ENCODE measurements at regions of chr18 and their contacts with region 1.

Region 1: DNA sequence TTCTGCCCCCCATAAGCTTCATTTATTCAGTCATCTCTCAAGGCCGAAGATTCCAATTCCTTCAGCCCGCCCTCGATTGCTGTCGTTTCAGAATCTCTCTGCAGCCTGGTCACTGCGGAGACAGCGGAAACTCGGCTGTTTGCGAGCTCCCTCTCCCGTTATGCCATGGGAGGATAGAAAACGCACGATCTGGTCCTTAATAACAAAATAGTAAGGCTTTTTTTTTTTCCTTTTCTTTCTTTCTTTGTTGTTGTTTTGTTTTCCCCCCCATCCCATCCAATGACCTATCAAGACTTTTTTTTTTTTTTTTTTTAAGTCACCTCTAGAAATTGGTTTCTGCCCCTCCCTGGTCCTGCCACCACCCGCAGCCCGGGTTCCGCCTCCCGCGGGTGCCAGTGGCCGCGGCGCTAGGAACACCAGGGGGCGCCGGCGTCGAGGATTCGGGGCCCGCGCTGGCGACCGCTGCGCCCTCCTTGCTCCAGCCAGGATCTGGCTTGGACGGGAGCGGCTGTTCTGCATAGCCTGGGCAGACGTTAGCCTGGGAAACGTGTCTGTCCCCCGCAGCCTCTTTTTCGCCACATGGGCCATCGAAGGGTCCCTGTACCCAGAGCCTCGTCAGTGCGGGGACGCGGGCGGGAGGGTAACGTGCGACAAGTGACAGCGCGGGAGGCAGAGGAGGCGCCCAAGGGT is 10.1 kb downstream of the CPLX4 start:
- DNase-seq: peak; percentile 80 to 82 (median 80)
- ATAC-seq: peak; percentile 99 to 100 (median 100)
- H3K4me3 ChIP-seq: peak overlapping the region in 1 of 3 donors; percentile 5
- H3K27ac ChIP-seq: no peak overlapping the region
- H3K4me1 ChIP-seq: peaks cover 0 to 5% (median 2%) of the 10 kb centered on the region in 4 donors
- H3K27me3 ChIP-seq: no peaks in the 10 kb centered on the region
- CTCF ChIP-seq: peak; percentile 66 to 86 (median 84)
- POLR2A ChIP-seq: no peak

Region 2: DNA sequence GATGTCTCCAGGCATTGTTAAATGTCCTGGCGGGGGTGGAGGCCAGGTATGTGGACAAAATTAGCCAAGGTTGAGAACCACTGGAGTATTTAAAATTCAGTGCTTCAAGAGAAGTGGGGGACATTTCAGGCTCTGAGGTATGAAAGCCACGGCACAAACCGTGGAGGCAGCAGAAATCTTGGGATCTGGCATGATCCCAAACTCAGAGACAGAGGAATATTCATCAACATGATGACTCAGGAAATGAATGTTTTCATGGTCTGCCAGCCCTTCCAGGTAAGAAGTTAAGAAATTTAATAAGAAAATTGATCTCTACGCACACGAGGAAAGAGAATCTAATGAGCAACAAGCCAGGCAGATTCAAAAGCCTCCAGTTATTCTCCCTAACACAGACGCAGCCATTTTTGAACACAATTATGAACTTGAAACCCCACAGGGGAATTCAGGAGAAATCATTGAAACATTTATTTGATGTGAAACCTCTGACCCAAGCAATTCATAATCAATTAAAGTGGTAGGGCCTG is 99.7 kb before region 1 on chr18:
- intact Hi-C with region 1: no loop called
- DNase-seq: no peak
- ATAC-seq: no peak
- H3K4me3 ChIP-seq: no peak overlapping the region
- H3K27ac ChIP-seq: no peak overlapping the region
- H3K4me1 ChIP-seq: no peaks in the 10 kb centered on the region
- H3K27me3 ChIP-seq: no peaks in the 10 kb centered on the region
- CTCF ChIP-seq: no peak
- POLR2A ChIP-seq: no peak

Region 3: DNA sequence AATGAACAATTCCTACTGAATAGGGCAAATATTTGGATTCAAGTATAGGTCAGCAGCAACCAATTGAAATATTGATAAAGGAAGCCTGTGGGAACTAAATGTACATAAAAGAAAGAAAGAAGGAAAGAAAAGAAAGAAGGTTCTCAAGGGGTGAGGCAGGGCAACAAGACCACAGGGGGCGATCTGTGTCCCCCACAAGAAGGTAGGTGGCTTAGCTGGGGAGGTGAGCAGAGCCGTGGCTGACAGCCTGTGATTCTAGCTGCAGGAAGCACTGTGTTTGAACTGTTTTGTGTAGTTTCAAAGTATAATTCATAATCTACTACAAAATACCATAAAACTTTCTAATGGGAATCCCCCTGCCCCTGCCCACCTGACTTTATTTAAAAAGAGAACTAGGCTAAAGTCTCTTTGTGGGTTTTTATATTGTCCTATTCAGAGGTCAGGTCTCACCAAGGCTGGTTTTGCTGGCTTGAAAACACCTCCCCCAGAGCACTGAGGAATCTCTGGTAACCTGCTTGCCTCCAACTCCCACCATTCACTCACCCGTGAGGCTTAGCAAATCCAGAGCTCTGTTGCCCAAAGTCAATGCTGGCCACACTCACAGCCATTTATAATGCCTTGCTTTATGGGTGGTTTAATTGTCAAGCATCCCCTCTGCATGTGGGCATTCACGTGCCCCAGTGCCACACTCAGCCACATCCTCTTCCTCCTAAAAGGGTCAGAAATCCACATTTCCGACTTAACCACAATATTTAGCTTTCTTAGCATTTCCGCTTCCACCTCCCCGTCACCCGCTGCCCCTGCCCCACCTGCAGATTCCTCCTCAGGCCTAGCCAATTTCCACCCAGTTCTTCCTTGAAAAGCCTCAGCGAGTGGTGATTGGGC is 87.1 kb after region 1 on chr18:
- intact Hi-C with region 1: loop called in 1 of 2 experiments (anchors 10 kb)
- DNase-seq: no peak
- ATAC-seq: no peak
- H3K4me3 ChIP-seq: no peak overlapping the region
- H3K27ac ChIP-seq: no peak overlapping the region
- H3K4me1 ChIP-seq: no peaks in the 10 kb centered on the region
- H3K27me3 ChIP-seq: no peaks in the 10 kb centered on the region
- CTCF ChIP-seq: no peak
- POLR2A ChIP-seq: no peak

Measured in right lobe of liver (tissue), 6 donors.